Mammary epithelial cell (primary cell): ENCODE measurements at regions of chr16 and their contacts with region 1.

Region 1: DNA sequence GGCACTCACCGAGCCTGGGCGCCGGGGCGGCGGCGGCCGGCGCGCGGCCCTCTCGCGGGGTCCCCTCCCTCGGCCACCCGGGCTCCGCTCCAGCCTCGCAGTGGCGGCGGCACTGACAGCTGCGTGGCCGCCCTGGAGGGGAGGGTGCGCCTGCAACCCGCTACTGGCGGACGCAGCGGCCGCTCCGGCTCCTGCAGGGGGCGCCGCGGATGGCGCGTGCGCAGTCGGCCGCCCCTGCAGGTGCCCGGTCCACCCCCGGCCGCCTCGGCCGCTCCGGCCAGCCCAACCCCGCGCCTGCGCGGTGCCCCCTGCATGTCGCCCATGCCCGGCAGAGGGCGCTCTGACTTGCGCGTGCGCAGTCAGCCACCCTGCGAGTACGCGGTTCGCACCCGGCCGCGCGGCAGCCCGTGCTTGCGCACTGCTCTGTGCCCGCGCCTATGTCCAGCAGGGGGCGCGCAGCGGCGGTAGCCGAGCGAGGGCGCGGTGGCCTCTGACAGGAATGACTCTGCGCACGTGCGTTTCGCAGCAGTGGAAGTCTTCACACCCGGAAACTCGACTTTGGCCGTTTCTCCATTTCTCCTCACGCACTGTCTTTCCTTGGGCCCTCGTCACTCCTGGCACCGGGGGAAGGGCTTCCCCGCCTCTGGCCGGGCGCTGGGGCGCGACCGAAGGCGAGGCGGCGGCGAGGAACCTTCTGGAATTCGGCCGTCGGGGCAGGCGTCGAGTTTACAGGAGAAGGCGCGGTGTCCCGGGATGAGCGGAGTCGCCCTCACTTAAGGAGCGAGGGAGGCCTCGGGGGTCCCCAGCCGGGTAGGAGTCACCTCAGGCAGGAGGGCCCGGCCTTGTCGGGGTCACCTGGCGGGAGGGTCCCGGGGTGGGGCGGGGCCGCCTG is at the start of gene ABCA3:
- DNase-seq: peak; percentile 89
- H3K4me3 ChIP-seq: peak within 1 kb of the TSS; percentile 29 to 58 (median 53)
- H3K27ac ChIP-seq: no peak within 1 kb of the TSS
- H3K4me1 ChIP-seq: peaks cover 10% of the 10 kb centered on the region
- H3K27me3 ChIP-seq: peaks cover 3% of the 10 kb centered on the region
- CTCF ChIP-seq: peak; percentile 87 to 94
- total RNA-seq, gene ABCA3: 0.85 to 4.0 TPM

Region 2: DNA sequence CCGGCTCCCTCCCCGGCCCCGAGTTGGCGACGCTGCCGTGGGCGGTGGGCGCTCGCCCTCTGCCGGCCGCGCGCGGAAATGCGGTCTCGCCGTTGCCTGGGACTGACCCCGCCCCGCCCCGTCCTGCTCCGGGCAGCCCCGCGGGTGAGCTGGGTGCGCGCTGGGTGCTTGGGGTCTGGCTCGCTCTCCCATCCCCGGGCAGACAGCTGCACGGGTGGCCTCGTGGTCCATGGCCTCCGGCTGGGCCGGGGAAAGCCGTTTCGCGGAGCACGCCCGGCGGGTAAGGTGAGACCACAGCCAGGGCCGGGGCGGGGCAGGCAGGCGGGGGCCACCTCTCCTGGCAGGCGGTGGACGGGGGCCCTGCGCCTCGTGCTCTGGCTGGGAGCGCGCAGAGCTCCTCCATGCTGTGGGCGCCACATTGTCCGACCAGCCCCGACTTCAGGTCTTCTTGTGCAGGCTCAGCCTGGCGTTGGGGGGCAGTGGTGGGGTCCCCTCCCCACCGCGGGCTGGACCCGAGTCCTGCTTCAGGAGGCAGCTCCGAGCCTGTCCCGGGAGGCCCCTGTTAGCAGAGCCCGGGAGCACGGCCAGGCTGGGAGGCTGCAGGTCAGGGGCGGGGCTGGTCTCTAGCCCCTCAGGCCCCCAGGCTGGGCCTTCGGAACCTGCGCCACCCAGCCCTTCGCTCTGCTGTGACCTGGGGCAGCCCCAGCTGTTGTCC is 1237.7 kb before region 1 on chr16:
- CTCF ChIA-PET with region 1: no interaction called
- dilution Hi-C with region 1: no loop called
- in situ Hi-C with region 1: no loop called
- intact Hi-C with region 1: no loop called
- DNase-seq: no peak
- H3K4me3 ChIP-seq: peak overlapping the region in 1 of 3 experiments; percentile 7
- H3K27ac ChIP-seq: no peak overlapping the region
- H3K4me1 ChIP-seq: peaks cover 4% of the 10 kb centered on the region
- H3K27me3 ChIP-seq: peaks cover 21% of the 10 kb centered on the region
- CTCF ChIP-seq: peak; percentile 32 to 60

Region 3: DNA sequence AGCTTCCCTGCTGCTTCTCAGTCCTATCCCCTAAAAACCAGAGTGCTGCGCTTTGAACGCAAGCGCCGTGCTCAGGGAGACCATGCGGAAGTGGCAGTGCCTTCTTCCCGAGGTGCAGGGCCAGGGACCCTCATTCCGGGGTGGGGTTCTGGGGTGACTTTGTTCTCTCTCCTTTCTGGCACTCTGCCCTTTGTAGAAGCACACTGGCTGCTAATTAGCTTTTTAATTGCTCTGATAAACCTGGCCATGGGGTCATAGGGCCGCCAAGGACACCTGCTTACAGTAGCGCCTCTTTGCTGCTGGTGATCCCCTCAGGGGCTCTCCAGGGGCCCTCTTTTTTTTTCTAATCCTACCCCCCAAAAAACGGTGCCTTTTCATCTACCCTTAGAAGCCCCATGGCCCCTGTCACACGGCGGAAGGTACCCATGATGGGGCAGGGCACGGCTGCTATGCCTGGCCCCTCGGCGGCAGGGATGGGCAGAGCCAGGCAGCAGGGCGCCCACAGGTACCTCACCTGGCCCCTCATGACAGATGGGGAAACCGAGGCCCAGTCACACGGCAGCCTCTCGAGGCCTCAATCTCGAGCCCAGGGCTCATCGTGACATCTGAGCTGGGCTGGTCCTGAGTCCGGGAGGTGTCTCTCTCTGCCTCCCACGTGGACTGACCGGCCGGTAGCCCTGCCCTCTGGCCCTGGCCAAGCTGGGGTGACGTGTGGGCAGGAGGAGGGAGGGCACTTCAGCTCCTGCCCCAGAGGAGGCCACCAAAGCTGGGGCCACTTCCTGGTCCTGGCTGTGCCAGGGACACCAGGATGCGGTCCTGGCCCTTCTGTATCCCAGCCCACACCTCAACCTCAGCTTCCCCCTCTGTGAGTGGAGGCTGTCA is 173.8 kb before region 1 on chr16:
- CTCF ChIA-PET with region 1: no interaction called
- dilution Hi-C with region 1: loop called (anchors 5 kb)
- in situ Hi-C with region 1: no loop called
- intact Hi-C with region 1: no loop called
- DNase-seq: no peak
- H3K4me3 ChIP-seq: no peak overlapping the region
- H3K27ac ChIP-seq: no peak overlapping the region
- H3K4me1 ChIP-seq: peaks cover 42% of the 10 kb centered on the region
- H3K27me3 ChIP-seq: no peaks in the 10 kb centered on the region
- CTCF ChIP-seq: no peak

Region 4: DNA sequence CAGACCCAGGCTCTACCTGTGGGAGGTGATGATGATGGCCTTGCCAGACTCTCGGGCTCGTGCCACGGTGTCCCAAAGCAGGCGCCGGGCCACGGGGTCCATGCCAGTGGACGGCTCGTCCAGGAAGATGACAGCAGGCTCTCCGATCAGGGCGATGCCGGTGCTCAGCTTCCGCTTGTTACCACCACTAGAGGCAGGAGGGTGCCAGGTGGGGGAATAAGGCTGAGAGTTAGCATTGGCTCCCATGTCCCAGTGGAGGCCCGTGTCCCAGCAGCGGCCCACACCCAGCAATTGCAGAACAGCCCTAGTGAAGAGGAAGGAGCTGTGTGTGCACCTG is 62.6 kb before region 1 on chr16:
- CTCF ChIA-PET with region 1: no interaction called
- dilution Hi-C with region 1: loop called (anchors 5 kb)
- in situ Hi-C with region 1: no loop called
- intact Hi-C with region 1: no loop called
- DNase-seq: no peak
- H3K4me3 ChIP-seq: no peak overlapping the region
- H3K27ac ChIP-seq: no peak overlapping the region
- H3K4me1 ChIP-seq: no peaks in the 10 kb centered on the region
- H3K27me3 ChIP-seq: peaks cover 3% of the 10 kb centered on the region
- CTCF ChIP-seq: no peak

Region 5: DNA sequence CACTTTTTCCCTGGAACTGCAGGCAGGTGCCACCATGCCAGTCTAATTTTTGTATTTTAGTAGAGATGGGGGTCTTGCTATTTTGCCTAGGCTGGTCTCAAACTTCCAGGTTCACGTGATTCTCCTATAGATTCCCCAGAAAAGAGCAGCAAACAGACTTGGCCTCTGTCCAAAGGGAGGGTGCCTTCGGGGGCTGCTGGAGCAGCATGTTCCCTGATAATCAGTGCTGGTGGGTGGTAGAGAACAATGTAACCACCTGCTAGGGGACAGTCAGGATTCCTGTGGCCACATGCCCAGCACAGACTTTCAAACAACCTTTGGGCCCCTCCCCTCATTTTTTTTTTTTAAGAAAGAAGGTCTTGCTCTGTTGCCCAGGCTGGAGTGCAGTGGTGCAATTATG is 74.3 kb after region 1 on chr16:
- CTCF ChIA-PET with region 1: no interaction called
- dilution Hi-C with region 1: loop called (anchors 5 kb)
- in situ Hi-C with region 1: no loop called
- intact Hi-C with region 1: no loop called
- DNase-seq: no peak
- H3K4me3 ChIP-seq: no peak overlapping the region
- H3K27ac ChIP-seq: no peak overlapping the region
- H3K4me1 ChIP-seq: no peaks in the 10 kb centered on the region
- H3K27me3 ChIP-seq: no peaks in the 10 kb centered on the region
- CTCF ChIP-seq: no peak

Region 6: DNA sequence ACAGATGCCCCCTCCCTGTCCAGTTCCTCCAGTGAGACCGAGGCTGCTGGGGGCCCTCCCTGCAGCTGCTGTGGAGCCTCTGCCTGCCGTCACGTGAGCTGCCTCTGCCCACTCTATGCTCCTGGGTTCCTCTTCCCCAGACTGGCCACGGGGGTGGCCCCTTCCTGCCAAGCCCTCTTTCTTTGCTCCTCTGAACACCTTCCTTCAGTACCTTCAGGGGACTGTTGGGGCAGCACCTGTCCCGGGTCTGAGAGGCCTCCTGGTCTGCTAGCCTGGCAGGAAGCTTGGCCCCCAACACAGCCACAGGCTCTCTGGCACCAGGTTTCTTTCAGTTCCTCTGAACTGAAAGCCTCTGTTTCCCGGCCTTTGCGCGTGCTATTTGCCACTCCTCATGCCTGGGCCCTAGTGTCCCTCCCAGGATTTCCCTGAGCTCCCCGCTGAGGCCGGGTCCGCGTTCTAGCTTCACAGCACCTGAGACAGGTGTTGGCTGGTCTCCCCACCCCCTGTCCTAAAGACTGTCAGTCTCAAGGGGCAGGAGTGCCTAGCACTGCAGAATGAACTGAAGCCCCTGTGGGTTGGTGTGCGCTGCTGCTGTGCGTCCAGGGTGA is 166.3 kb after region 1 on chr16:
- CTCF ChIA-PET with region 1: no interaction called
- dilution Hi-C with region 1: loop called (anchors 5 kb)
- in situ Hi-C with region 1: no loop called
- intact Hi-C with region 1: no loop called
- DNase-seq: no peak
- H3K4me3 ChIP-seq: no peak overlapping the region
- H3K27ac ChIP-seq: no peak overlapping the region
- H3K4me1 ChIP-seq: no peaks in the 10 kb centered on the region
- H3K27me3 ChIP-seq: no peaks in the 10 kb centered on the region
- CTCF ChIP-seq: no peak